A673 (cell line): ENCODE measurements at regions of chr11 and their contacts with region 1.

Region 1: GRCh38 chr11:47225552-47226400 is 11.0 kb downstream of the DDB2 start:
- DNase-seq: no peak
- H3K4me3 ChIP-seq: no peak overlapping the region
- H3K27ac ChIP-seq: no peak overlapping the region
- H3K4me1 ChIP-seq: no peaks in the 10 kb centered on the region
- H3K27me3 ChIP-seq: no peaks in the 10 kb centered on the region
- CTCF ChIP-seq: no peak

Region 2: GRCh38 chr11:47020793-47021526 is 204.8 kb before region 1 on chr11:
- CTCF ChIA-PET with region 1: no interaction called
- POLR2A ChIA-PET with region 1: interaction called, 15 read pairs
- intact Hi-C with region 1: no loop called
- DNase-seq: no peak
- H3K4me3 ChIP-seq: no peak overlapping the region
- H3K27ac ChIP-seq: no peak overlapping the region
- H3K4me1 ChIP-seq: peaks cover 10% of the 10 kb centered on the region
- H3K27me3 ChIP-seq: no peaks in the 10 kb centered on the region
- CTCF ChIP-seq: no peak

Region 3: DNA sequence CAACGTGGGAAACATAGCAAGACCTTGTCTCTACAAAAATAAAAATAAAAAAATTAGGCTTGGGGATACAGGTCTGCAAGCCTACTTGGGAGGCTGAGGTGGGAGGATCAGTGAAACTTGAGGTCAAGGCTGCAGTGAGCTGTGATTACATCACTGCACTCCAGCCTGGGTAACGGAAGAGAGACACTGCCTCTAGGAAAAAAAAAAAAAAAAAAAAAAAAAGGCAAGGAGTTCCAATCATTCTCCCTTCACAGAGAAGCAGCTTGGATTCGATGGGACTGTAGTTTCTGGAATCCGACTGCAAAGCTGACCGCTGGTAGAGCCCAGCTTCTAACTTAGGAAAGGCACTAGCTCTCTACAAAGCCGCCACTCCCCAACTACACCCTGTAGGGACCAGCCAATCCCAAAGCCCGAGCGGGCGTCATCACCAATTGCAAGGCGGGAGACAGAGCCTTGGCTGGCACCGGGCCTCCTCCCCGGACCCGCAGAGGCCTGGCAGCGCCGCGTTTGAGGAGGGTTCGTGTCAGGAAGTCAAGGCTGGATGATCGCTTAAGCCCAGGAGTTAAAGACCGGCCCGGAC is 11.7 kb before region 1 on chr11:
- CTCF ChIA-PET with region 1: no interaction called
- POLR2A ChIA-PET with region 1: interaction called, 23 read pairs
- intact Hi-C with region 1: no loop called
- DNase-seq: peak; percentile 99
- H3K4me3 ChIP-seq: peak overlapping the region; percentile 62
- H3K27ac ChIP-seq: peak overlapping the region; percentile 86
- H3K4me1 ChIP-seq: peaks cover 16% of the 10 kb centered on the region
- H3K27me3 ChIP-seq: no peaks in the 10 kb centered on the region
- CTCF ChIP-seq: no peak

Region 4: GRCh38 chr11:47274495-47275230 is 48.9 kb after region 1 on chr11:
- CTCF ChIA-PET with region 1: no interaction called
- POLR2A ChIA-PET with region 1: interaction called, 14 read pairs
- intact Hi-C with region 1: no loop called
- DNase-seq: no peak
- H3K4me3 ChIP-seq: no peak overlapping the region
- H3K27ac ChIP-seq: no peak overlapping the region
- H3K4me1 ChIP-seq: peaks cover 15% of the 10 kb centered on the region
- H3K27me3 ChIP-seq: no peaks in the 10 kb centered on the region
- CTCF ChIP-seq: no peak